ENCODE measurements at regions of chr12 and their contacts with region 1.

Region 1: DNA sequence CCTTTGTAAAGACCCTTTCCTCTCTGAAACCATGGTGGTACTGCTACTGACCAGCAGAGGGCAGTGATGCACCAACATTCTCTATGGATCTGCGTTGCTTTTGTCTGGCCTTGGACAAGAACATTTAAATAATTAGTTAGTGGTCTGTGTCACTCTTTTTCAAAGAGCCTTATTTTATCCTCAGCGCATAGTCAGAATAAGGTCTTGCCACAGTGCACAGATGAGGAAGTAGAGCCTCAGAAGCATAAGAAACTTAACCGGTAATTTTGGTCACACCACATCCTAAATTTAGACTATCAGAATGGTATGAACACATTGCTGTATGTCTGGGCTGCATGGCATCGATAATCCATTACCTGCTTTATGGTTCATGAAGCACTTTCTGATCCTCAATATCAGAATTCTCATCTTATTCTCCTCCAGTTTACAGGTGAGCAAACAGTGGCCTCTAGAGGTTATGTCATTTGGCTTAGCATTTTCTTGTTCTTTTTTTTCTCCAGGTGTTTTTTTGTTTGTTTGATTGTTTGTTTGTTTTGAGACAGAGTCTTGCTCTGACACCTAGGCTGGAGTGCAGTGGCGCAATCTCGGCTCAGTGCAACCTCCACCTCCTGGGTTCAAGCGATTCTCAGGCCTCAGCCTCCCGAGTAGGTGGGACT is 23.7 kb upstream of the IFT81 start:
- DNase-seq: peak; percentile 89
- H3K4me3 Mint-ChIP-seq: peak overlapping the region; percentile 0
- H3K27ac Mint-ChIP-seq: peak overlapping the region; percentile 36
- H3K4me1 Mint-ChIP-seq: peaks cover 12% of the 10 kb centered on the region
- H3K27me3 Mint-ChIP-seq: no peaks in the 10 kb centered on the region

Region 2: DNA sequence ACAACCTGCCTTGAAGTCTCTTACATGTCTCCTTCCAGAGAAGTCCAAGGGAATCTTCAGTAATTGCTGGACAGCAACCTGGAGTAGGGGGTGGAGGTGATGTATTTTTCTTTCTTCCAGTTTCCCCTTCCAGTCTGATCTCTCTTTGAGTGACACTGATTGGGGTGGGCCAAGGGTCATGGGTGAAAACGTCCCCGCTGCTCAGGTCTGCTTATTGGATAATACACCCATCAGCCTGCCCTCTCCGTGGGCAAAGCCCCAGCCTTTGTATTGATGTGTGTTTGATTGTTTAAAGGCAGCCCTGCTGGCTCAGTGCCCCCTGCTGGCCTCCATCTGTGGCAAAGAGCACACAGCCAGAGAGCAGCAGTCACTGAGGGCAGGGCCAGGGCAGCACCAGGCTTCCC is 144.9 kb after region 1 on chr12:
- intact Hi-C with region 1: loop called (anchors 1 kb)
- DNase-seq: peak; percentile 85
- H3K4me3 Mint-ChIP-seq: no peak overlapping the region
- H3K27ac Mint-ChIP-seq: no peak overlapping the region
- H3K4me1 Mint-ChIP-seq: no peaks in the 10 kb centered on the region
- H3K27me3 Mint-ChIP-seq: peaks cover 3% of the 10 kb centered on the region

Measured in activated CD4-positive, alpha-beta T cell treated with anti-CD3 and anti-CD28 coated beads, Interleukin-2, amount 10 ng/mL, durations not matched to agents 24 days and 14 days (primary cell).